OCI-LY7 (cell line): ENCODE measurements at regions of chr15 and their contacts with region 1.

Region 1: DNA sequence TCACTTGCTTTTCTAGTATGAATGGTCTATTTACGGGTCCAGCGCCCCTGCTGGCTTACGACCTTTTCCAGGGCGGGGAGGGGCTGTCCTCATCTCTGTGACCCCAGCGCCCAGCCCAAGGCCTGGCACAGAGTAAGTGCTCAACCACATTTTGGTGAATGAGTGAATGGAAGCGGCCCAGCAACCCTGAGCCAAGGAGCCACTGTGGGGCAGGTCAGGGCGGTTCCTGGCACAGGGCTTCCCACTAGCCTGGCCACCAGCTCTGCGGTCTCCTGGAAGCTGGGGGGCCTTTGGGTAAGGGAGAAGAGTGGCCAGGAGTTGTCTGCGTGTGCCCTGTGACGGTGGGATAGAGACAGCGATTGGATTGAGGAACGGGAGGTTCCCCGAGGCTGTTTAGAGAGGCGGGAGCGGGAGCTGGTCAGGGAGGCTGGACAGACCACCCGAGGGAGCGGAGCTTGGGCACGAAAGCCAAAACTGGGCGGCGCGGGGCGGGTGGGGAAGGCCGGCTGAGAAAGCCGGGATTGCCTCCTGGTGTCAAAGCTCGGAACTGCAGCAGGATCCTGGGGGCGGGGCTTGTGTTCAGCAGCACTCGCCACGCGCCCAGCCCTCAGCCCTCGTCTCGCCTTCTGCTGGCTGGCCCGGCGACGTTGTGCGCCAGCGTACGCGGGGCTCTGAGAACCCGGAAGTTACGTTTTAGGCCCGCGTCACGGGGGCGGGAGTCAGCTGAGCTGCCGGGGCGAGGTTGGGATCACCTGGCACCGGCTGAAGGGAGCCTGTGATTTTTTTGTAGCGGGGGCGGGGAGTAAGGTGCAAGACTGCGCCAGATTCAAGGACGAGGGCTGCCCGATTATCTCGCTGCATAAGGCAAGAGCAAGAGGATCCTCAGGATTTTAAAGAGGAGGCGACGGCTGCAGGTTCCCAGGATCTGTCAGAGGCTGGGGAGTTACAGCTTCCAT is at the start of gene VPS18:
- DNase-seq: peak; percentile 98
- H3K4me3 ChIP-seq: peak within 1 kb of the TSS; percentile 90
- H3K27ac ChIP-seq: peak within 1 kb of the TSS; percentile 31
- H3K4me1 ChIP-seq: peaks cover 36% of the 10 kb centered on the region
- CTCF ChIP-seq: peak; percentile 76
- total RNA-seq, gene VPS18: 24.5 and 26.2 TPM in 2 replicates

Region 2: DNA sequence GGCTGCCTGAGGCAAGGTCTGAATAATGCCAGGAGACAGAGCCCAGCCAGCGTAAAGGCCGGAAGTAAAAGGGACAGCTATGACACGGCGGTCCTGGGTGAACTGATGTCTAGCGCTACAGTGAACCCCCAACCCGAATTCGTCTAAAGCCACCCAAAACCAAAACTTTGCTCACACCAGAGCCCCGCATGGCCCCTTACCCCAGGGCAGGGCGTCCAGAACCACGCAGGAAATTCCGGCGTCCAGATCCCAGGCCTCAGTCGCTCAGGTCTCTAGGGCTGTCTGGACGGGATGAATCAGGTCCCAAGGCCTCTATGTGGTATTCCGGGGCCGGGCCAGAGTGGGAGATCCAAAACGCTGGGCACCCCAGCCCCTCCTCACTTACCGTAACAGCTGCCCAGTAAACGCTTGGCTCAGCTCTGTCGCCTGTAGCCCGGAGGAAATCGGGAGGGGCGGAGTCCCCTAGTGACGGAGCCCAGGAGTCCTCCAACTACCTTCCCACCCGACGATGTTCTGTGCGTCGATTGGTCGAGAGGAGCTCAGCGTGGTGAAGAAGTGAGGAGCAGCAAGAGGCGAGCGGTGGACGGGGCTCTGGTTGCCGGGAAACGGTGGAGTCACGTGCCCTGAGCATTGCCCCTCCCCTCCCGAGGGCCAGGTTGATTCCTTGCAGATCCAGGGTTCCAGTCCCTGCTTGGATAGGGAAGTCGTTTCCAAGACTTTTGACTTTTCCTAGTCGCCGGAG is 329.2 kb before region 1 on chr15 and contains the start of gene CCDC32:
- CTCF ChIA-PET with region 1: no interaction called
- POLR2A ChIA-PET with region 1: no interaction called
- intact Hi-C with region 1: loop called (anchors 5 kb)
- DNase-seq: peak; percentile 98
- H3K4me3 ChIP-seq: peak within 1 kb of the TSS; percentile 92
- H3K27ac ChIP-seq: peak within 1 kb of the TSS; percentile 29
- H3K4me1 ChIP-seq: peaks cover 41% of the 10 kb centered on the region
- CTCF ChIP-seq: no peak
- total RNA-seq, gene CCDC32: 10.3 and 15.1 TPM in 2 replicates

Region 3: DNA sequence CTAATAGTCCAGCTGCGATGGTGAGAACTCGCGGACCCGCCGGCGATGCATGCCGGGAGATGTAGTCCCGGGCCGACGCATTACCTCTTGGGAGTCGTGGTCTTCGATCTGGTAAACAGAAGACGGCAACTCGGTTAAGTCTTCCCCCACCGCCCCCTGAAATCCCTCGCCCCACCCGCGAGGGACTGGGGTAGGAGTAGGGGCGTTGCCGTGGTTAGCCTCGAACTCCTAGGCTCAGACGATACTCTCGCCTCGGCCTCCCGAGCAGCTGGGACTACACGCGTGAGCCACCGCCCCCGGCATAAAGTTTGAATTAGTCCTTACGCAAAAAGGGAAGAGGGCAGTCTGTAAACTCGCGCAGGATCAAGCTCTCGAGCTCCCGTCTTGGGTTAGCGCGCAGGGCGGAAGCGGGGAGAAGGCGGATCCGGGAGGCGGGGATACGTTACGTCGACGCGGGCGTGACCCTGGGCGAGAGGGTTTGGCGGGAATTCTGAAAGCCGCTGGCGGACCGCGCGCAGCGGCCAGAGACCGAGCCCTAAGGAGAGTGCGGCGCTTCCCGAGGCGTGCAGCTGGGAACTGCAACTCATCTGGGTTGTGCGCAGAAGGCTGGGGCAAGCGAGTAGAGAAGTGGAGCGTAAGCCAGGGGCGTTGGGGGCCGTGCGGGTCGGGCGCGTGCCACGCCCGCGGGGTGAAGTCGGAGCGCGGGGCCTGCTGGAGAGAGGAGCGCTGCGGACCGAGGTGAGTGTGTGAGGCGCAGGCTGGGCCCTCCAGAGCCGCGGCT is 199.1 kb before region 1 on chr15 and contains the start of gene RAD51:
- CTCF ChIA-PET with region 1: interaction called, 5 read pairs
- POLR2A ChIA-PET with region 1: no interaction called
- intact Hi-C with region 1: loop called (anchors 5 kb)
- DNase-seq: peak; percentile 96
- H3K4me3 ChIP-seq: peak within 1 kb of the TSS; percentile 94
- H3K27ac ChIP-seq: peak within 1 kb of the TSS; percentile 89
- H3K4me1 ChIP-seq: peaks cover 26% of the 10 kb centered on the region
- CTCF ChIP-seq: no peak
- total RNA-seq, gene RAD51: 45.8 and 61.9 TPM in 2 replicates

Region 4: GRCh38 chr15:40769274-40770146 is 124.5 kb before region 1 on chr15 and contains the start of gene C15orf62:
- CTCF ChIA-PET with region 1: interaction called, 3 read pairs
- POLR2A ChIA-PET with region 1: no interaction called
- intact Hi-C with region 1: loop called (anchors 5 kb)
- DNase-seq: peak; percentile 94
- H3K4me3 ChIP-seq: peak within 1 kb of the TSS; percentile 61
- H3K27ac ChIP-seq: peak within 1 kb of the TSS; percentile 97
- H3K4me1 ChIP-seq: peaks cover 59% of the 10 kb centered on the region
- CTCF ChIP-seq: no peak
- total RNA-seq, gene C15orf62: 4.0 and 4.7 TPM in 2 replicates

Region 5: GRCh38 chr15:40857601-40858341 is 36.2 kb before region 1 on chr15:
- CTCF ChIA-PET with region 1: interaction called, 70 read pairs
- POLR2A ChIA-PET with region 1: interaction called, 34 read pairs
- intact Hi-C with region 1: loop called (anchors 1 kb)
- DNase-seq: peak; percentile 77
- H3K4me3 ChIP-seq: no peak overlapping the region
- H3K27ac ChIP-seq: no peak overlapping the region
- H3K4me1 ChIP-seq: peaks cover 22% of the 10 kb centered on the region
- CTCF ChIP-seq: peak; percentile 97